H1 (cell line): ENCODE measurements at regions of chr7 and their contacts with region 1.

Region 1: GRCh38 chr7:23055582-23056178 is 41.8 kb upstream of the HYCC1 start:
- DNase-seq: no peak
- H3K4me3 ChIP-seq: no peak overlapping the region
- H3K27ac ChIP-seq: no peak overlapping the region
- H3K4me1 ChIP-seq: no peaks in the 10 kb centered on the region
- H3K27me3 ChIP-seq: no peaks in the 10 kb centered on the region
- CTCF ChIP-seq: peak in 2 of 3 experiments; percentile 78 to 83; a peak in 3 of 4 replicates
- EP300 ChIP-seq: no peak
- POLR2A ChIP-seq: no peak
- RAD21 ChIP-seq: peak; percentile 98

Region 2: GRCh38 chr7:22732556-22733126 is 323.0 kb before region 1 on chr7:
- CTCF ChIA-PET with region 1: interaction called, 22 read pairs
- POLR2A ChIA-PET with region 1: no interaction called
- DNase-seq: no peak
- H3K4me3 ChIP-seq: no peak overlapping the region
- H3K27ac ChIP-seq: no peak overlapping the region
- H3K4me1 ChIP-seq: peaks cover 0 to 2% (median 0%) of the 10 kb centered on the region in 4 experiments; a peak in 1 of 7 replicates
- H3K27me3 ChIP-seq: no peaks in the 10 kb centered on the region
- CTCF ChIP-seq: peak in 2 of 3 experiments; percentile 33 to 53; a peak in 2 of 4 replicates
- EP300 ChIP-seq: no peak
- POLR2A ChIP-seq: no peak
- RAD21 ChIP-seq: peak; percentile 58 to 61

Region 3: DNA sequence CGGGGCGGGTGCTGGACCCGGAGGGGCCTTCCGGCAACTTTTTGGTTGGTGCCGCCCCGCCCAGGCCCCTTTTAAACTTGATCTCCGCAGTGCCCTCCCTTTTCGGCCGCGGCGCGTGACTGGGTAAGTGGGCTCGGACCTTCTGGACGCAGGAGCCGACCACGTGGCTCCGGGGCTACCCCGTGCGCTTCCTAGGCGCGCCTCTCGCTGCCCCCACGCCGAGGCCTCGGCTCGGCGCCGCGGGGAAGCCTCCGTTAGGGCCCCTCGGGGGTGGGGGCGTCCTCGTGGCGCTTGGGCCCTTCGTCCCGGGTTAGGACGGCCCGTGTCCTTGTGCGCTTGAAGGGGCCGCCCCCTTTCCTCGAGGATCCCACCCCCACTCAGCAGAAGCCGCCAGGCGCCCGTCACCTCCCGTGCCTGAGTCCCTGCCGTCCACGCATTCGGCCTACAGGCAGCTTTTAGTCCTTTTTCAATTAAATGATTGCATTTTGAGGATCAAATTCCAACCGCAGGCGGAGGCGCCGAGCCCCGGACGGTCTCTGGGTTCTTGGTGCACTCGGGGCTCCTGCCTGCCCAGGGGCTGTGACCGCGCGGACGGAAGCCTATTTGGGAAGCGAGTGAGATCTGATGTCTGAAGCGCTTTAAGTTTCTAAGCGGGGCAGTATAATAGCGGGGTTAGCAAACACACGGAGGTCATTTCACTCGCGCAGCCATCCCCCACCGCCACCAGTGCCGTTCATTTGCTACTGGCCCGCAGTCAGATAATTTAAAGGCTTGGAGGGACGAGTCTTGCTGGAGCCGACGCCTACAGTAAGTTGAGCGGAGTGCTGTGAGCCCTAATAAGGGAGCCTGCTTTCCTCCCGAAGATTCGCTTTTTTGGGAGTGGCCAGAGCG is 201.3 kb before region 1 on chr7:
- CTCF ChIA-PET with region 1: interaction called, 11 read pairs
- POLR2A ChIA-PET with region 1: interaction called, 12 read pairs
- DNase-seq: peak; percentile 62 to 88
- H3K4me3 ChIP-seq: peak overlapping the region; percentile 58 to 81 (median 74)
- H3K27ac ChIP-seq: peak overlapping the region; percentile 88
- H3K4me1 ChIP-seq: peaks cover 0 to 18% (median 14%) of the 10 kb centered on the region in 4 experiments
- H3K27me3 ChIP-seq: no peaks in the 10 kb centered on the region; a peak in 1 of 7 replicates
- CTCF ChIP-seq: peak in 1 of 3 experiments; percentile 34; a peak in 2 of 4 replicates
- EP300 ChIP-seq: no peak
- POLR2A ChIP-seq: peak; percentile 69 to 73
- RAD21 ChIP-seq: 0 out of 4 replicates have a peak, but pooled peaks have one; percentile 17 to 38

Region 4: GRCh38 chr7:22872096-22872807 is 183.4 kb before region 1 on chr7:
- CTCF ChIA-PET with region 1: interaction called, 18 read pairs
- POLR2A ChIA-PET with region 1: interaction called, 4 read pairs
- DNase-seq: no peak
- H3K4me3 ChIP-seq: no peak overlapping the region
- H3K27ac ChIP-seq: no peak overlapping the region
- H3K4me1 ChIP-seq: 0 out of 7 replicates have a peak, but pooled peaks cover 0 to 2% (median 0%) of the 10 kb centered on the region in 4 experiments
- H3K27me3 ChIP-seq: no peaks in the 10 kb centered on the region
- CTCF ChIP-seq: no peak
- EP300 ChIP-seq: no peak
- POLR2A ChIP-seq: no peak
- RAD21 ChIP-seq: no peak

Region 5: GRCh38 chr7:23026164-23026563 is 29.5 kb before region 1 on chr7:
- CTCF ChIA-PET with region 1: interaction called, 13 read pairs
- POLR2A ChIA-PET with region 1: no interaction called
- DNase-seq: no peak
- H3K4me3 ChIP-seq: no peak overlapping the region
- H3K27ac ChIP-seq: no peak overlapping the region
- H3K4me1 ChIP-seq: no peaks in the 10 kb centered on the region
- H3K27me3 ChIP-seq: no peaks in the 10 kb centered on the region
- CTCF ChIP-seq: no peak
- EP300 ChIP-seq: no peak
- POLR2A ChIP-seq: no peak
- RAD21 ChIP-seq: no peak